CD4-positive, alpha-beta T cell (primary cell): ENCODE measurements at regions of chr22 and their contacts with region 1.

Region 1: GRCh38 chr22:47386812-47387510 is 624.5 kb downstream of the TBC1D22A start:
- DNase-seq: no peak
- ATAC-seq: no peak
- H3K4me3 ChIP-seq: no peak overlapping the region
- H3K4me3 Mint-ChIP-seq: no peak overlapping the region
- H3K27ac ChIP-seq: no peak overlapping the region
- H3K27ac Mint-ChIP-seq: no peak overlapping the region
- H3K4me1 ChIP-seq: no peaks in the 10 kb centered on the region
- H3K4me1 Mint-ChIP-seq: no peaks in the 10 kb centered on the region
- H3K27me3 ChIP-seq: no peaks in the 10 kb centered on the region
- H3K27me3 Mint-ChIP-seq: peaks cover 9% of the 10 kb centered on the region
- CTCF ChIP-seq: no peak

Region 2: DNA sequence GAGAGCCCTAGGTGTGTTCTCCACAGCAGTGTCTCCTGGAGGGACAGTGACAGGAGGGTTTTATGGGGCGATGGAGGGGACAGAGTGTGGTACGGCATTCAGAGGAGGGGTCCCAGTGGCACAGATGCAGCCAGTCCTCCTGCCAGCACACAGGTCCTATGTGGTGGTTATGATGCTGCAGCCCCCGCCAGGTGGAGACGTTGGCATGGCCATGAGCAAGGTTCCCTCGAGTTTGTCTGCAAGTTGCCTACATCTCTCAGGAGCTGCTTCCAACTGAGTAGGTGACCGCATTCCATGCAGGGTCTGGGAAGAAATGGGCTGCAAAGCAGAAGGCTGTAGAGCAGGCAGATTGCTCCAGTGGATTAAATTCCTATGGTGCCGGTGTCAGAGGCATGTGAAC is 21.4 kb after region 1 on chr22:
- CTCF ChIA-PET with region 1: no interaction called
- POLR2A ChIA-PET with region 1: no interaction called
- intact Hi-C with region 1: loop called in 1 of 2 experiments (anchors 1 kb)
- DNase-seq: no peak
- ATAC-seq: no peak
- H3K4me3 ChIP-seq: no peak overlapping the region
- H3K4me3 Mint-ChIP-seq: no peak overlapping the region
- H3K27ac ChIP-seq: no peak overlapping the region
- H3K27ac Mint-ChIP-seq: no peak overlapping the region
- H3K4me1 ChIP-seq: no peaks in the 10 kb centered on the region
- H3K4me1 Mint-ChIP-seq: no peaks in the 10 kb centered on the region
- H3K27me3 ChIP-seq: peaks cover 3 to 6% of the 10 kb centered on the region in 2 experiments
- H3K27me3 Mint-ChIP-seq: peaks cover 36% of the 10 kb centered on the region
- CTCF ChIP-seq: no peak